Activated T-helper 2 cell treated with anti-CD3 and anti-CD28 coated beads, Interferon-gamma antibody, Interleukin-2, Interleukin-4, amounts not matched to agents 10 μg/mL and 5 μg/mL and 100 μg/mL, durations not matched to agents 14 hours and 24 hours and 36 hours (primary cell): ENCODE measurements at regions of chr3 and their contacts with region 1.

Region 1: GRCh38 chr3:197906023-197906849 is 43.8 kb upstream of the RPL35A start:
- DNase-seq: peak; percentile 70
- H3K4me3 Mint-ChIP-seq: no peak overlapping the region
- H3K27ac Mint-ChIP-seq: peak overlapping the region; percentile 83
- H3K4me1 Mint-ChIP-seq: peaks cover 20% of the 10 kb centered on the region
- H3K27me3 Mint-ChIP-seq: no peaks in the 10 kb centered on the region

Region 2: DNA sequence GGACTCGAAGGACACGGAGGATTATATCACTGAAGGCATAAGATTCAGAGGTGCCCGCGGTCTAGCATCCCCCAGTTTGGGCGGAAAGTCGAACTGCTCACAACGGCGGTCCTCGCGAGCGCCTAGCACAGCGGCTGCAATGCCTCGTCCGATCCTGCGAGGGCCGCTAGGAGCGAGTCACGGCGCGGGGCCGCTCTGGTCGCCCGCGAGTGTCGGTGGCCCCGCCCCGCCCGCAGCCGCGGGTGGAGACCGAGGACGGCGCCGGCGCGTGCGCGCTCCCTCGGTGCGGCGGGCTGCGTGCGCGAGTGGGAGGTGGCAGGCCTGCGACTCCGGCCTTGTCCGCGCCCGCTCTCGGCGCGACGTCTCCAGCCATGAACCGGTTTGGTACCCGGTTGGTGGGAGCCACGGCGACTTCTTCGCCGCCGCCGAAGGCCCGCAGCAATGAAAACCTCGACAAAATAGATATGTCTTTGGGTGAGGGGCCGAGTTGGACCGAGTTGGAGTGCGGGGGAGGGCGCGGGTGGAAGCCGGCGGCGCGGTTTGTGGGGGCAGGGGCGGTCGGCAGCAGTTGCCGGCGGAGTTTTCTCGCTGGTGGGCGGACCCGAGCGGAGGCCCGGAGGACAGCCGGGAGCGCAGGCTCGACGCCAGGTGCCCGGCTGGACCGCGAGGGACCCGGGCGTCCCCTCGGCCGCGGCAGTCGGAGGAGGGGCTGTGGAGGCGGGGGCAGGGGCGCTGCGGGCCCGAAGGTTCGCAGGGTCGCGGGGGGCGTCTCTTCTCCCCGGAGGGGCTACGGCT is 156.4 kb before region 1 on chr3 and contains the start of gene FYTTD1:
- intact Hi-C with region 1: loop called (anchors 1 kb)
- DNase-seq: peak; percentile 81
- H3K4me3 Mint-ChIP-seq: peak within 1 kb of the TSS; percentile 93
- H3K27ac Mint-ChIP-seq: peak within 1 kb of the TSS; percentile 93
- H3K4me1 Mint-ChIP-seq: peaks cover 30% of the 10 kb centered on the region
- H3K27me3 Mint-ChIP-seq: peaks cover 4% of the 10 kb centered on the region
- total RNA-seq, gene FYTTD1: 57.5 and 63.0 TPM in 2 replicates

Region 3: GRCh38 chr3:197926418-197926817 is 20.2 kb after region 1 on chr3:
- intact Hi-C with region 1: loop called (anchors 1 kb)
- DNase-seq: no peak
- H3K4me3 Mint-ChIP-seq: no peak overlapping the region
- H3K27ac Mint-ChIP-seq: no peak overlapping the region
- H3K4me1 Mint-ChIP-seq: peaks cover 5% of the 10 kb centered on the region
- H3K27me3 Mint-ChIP-seq: no peaks in the 10 kb centered on the region

Region 4: GRCh38 chr3:197936819-197937384 is 30.7 kb after region 1 on chr3:
- intact Hi-C with region 1: no loop called
- DNase-seq: no peak
- H3K4me3 Mint-ChIP-seq: no peak overlapping the region
- H3K27ac Mint-ChIP-seq: no peak overlapping the region
- H3K4me1 Mint-ChIP-seq: peaks cover 5% of the 10 kb centered on the region
- H3K27me3 Mint-ChIP-seq: no peaks in the 10 kb centered on the region

Region 5: DNA sequence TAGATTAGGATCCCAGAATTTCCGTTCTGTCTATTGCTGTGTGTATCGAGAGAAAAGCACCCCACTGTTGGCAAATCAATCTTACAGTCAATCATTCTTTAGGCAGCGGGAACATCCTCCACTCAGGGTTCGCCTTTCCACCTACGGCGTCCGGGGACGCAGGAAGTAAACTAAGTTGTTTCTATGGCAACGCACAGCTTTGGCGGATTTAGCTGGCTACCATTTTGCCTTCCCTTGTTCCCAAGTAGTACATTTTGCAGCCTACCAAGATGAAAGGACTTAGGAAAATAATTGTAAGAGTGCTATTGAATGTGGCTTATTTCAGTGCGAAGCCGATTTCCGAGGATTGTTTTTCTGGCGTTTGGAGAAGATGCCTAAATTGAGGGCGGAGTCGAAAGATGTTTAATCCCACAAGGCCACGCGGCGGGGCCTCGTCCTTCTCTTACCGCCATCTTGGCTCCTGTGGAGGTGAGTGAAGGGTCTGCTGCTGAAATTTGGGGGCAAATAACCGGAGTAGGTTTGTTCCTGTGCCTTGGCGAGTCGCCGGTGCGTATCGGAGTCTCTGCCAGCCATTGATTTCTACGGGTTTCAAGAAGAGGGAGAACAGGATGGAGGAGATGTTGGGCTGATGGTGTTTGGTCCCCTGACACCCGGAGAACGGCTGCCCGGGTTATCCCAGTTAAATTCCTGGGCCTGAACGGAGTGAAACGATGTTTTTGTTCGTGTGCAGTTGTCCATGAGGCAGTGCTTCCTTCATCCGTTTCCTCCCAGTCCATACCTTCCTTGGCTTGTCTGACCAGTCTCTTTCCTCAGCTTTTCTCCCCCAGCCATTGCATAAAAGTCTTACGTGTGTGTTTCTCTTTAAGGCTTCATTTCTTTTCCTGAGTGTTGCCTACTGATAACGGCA is 43.8 kb after region 1 on chr3 and contains the start of gene RPL35A:
- intact Hi-C with region 1: loop called (anchors 1 kb)
- DNase-seq: peak; percentile 81
- H3K4me3 Mint-ChIP-seq: peak within 1 kb of the TSS; percentile 99
- H3K27ac Mint-ChIP-seq: peak within 1 kb of the TSS; percentile 97
- H3K4me1 Mint-ChIP-seq: peaks cover 34% of the 10 kb centered on the region
- H3K27me3 Mint-ChIP-seq: no peaks in the 10 kb centered on the region
- total RNA-seq, gene RPL35A: 1,338 and 1,363 TPM in 2 replicates

Region 6: GRCh38 chr3:198071602-198072285 is 165.5 kb after region 1 on chr3:
- intact Hi-C with region 1: loop called (anchors 1 kb)
- DNase-seq: peak; percentile 48
- H3K4me3 Mint-ChIP-seq: peak overlapping the region; percentile 5
- H3K27ac Mint-ChIP-seq: peak overlapping the region; percentile 84
- H3K4me1 Mint-ChIP-seq: peaks cover 24% of the 10 kb centered on the region
- H3K27me3 Mint-ChIP-seq: peaks cover 2% of the 10 kb centered on the region